SK-N-SH (cell line): ENCODE measurements at regions of chr11 and their contacts with region 1.

Region 1: GRCh38 chr11:66883016-66883968 is 26.4 kb downstream of the LRFN4 start:
- DNase-seq: peak; percentile 85
- H3K4me3 ChIP-seq: no peak overlapping the region
- H3K27ac ChIP-seq: peak overlapping the region; percentile 13 to 48
- H3K4me1 ChIP-seq: peaks cover 4 to 60% of the 10 kb centered on the region in 2 experiments; a peak in 2 of 4 replicates
- H3K27me3 ChIP-seq: no peaks in the 10 kb centered on the region
- CTCF ChIP-seq: peak; percentile 72
- EP300 ChIP-seq: no peak
- RAD21 ChIP-seq: peak; percentile 72

Region 2: GRCh38 chr11:66842896-66843775 is 40.2 kb before region 1 on chr11 and contains the start of gene RCE1:
- CTCF ChIA-PET with region 1: interaction called, 11 read pairs
- POLR2A ChIA-PET with region 1: interaction called, 4 read pairs
- DNase-seq: peak; percentile 99
- H3K4me3 ChIP-seq: peak within 1 kb of the TSS; percentile 88 to 91
- H3K27ac ChIP-seq: peak within 1 kb of the TSS; percentile 85 to 90
- H3K4me1 ChIP-seq: peaks cover 13 to 24% of the 10 kb centered on the region in 2 experiments; a peak in 3 of 4 replicates
- H3K27me3 ChIP-seq: no peaks in the 10 kb centered on the region
- CTCF ChIP-seq: no peak
- EP300 ChIP-seq: no peak
- RAD21 ChIP-seq: no peak
- polyA plus RNA-seq, gene RCE1: 25.0 and 25.4 TPM in 2 replicates

Region 3: DNA sequence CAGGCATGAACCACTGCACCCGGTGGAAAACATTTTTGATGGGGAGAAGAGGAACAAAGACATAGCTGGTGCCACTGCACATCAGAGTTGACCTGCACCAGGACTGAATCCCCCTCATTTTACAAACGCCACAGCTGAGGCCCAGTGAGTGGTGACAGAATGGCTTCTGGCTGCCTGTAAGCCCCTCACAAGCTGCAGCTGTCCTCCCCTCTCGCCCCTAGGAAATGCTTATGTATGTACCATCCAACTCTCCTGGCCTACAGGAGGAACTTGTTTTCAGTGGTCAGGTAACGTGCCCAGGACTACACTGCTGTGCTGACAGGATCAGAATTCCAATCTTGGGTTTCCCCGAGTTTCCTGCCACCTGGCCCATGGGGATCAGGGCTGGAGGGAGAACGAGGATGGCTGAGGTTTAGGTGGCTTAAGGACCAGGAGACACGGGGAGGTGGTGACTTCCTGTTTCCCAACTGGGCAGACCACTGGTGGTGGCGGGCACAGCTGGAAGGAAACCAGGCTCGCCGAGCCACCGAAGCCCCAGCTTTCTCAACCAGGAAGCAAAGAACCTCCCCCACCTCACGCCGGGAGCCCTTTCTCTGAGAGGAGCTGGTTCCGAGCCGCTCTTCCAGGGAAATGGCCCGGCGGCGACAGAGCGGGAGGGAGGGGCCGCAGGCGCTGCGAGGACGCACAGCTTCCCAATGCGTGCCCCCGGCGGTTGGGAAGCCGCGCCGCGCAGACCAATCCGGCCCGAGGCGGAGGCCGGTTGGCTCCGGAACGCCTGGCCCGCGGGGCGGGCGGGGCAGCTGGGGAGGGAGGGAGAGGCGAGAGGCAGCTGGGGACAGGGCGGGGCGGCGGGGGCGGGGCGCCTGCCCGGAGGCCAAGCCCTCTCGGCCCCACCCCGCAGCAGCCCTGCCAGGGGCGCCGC is 27.5 kb before region 1 on chr11:
- CTCF ChIA-PET with region 1: interaction called, 17 read pairs
- POLR2A ChIA-PET with region 1: interaction called, 3 read pairs
- DNase-seq: peak; percentile 96
- H3K4me3 ChIP-seq: peak overlapping the region; percentile 81 to 83
- H3K27ac ChIP-seq: peak overlapping the region; percentile 59 to 76
- H3K4me1 ChIP-seq: peaks cover 0 to 10% of the 10 kb centered on the region in 2 experiments; a peak in 2 of 4 replicates
- H3K27me3 ChIP-seq: no peaks in the 10 kb centered on the region
- CTCF ChIP-seq: no peak
- EP300 ChIP-seq: no peak; a peak in 1 of 4 replicates
- RAD21 ChIP-seq: no peak

Region 4: DNA sequence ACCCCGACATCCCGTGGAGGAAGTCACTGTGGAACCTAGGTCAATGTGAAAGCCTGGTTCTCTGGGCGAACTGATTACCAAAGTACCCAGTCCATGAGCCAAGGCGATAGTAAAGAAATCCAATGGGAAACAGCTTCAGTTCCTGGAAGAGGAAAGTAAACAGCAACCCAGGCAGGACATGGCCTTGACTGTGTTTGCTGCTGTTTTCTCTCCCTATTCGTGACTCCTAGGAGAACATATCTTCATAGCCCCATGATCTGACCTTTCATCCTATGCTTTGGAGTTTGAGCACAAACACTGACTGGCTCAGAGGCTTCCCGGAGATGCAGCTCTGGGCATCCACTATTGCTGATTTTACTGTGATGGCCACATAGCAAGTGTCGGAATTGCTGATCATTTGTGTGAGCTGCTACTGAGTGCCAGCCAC is 18.7 kb after region 1 on chr11:
- CTCF ChIA-PET with region 1: interaction called, 14 read pairs
- POLR2A ChIA-PET with region 1: no interaction called
- DNase-seq: no peak
- H3K4me3 ChIP-seq: no peak overlapping the region
- H3K27ac ChIP-seq: no peak overlapping the region
- H3K4me1 ChIP-seq: no peaks in the 10 kb centered on the region
- H3K27me3 ChIP-seq: no peaks in the 10 kb centered on the region
- CTCF ChIP-seq: no peak
- EP300 ChIP-seq: no peak
- RAD21 ChIP-seq: no peak

Region 5: GRCh38 chr11:66915046-66915832 is 31.9 kb after region 1 on chr11:
- CTCF ChIA-PET with region 1: interaction called, 12 read pairs
- POLR2A ChIA-PET with region 1: no interaction called
- DNase-seq: no peak
- H3K4me3 ChIP-seq: no peak overlapping the region
- H3K27ac ChIP-seq: no peak overlapping the region
- H3K4me1 ChIP-seq: peaks cover 0 to 5% of the 10 kb centered on the region in 2 experiments; a peak in 1 of 4 replicates
- H3K27me3 ChIP-seq: no peaks in the 10 kb centered on the region
- CTCF ChIP-seq: no peak
- EP300 ChIP-seq: no peak
- RAD21 ChIP-seq: no peak